ENCODE measurements at regions of chr11 and their contacts with region 1.

Region 1: GRCh38 chr11:2077061-2077802 is 62.0 kb downstream of the IGF2 start:
- DNase-seq: peak; percentile 77
- ATAC-seq: peak; percentile 93
- H3K4me3 Mint-ChIP-seq: no peak overlapping the region
- H3K27ac Mint-ChIP-seq: peak overlapping the region; percentile 84
- H3K4me1 Mint-ChIP-seq: peaks cover 21% of the 10 kb centered on the region
- H3K27me3 Mint-ChIP-seq: peaks cover 30% of the 10 kb centered on the region

Region 2: DNA sequence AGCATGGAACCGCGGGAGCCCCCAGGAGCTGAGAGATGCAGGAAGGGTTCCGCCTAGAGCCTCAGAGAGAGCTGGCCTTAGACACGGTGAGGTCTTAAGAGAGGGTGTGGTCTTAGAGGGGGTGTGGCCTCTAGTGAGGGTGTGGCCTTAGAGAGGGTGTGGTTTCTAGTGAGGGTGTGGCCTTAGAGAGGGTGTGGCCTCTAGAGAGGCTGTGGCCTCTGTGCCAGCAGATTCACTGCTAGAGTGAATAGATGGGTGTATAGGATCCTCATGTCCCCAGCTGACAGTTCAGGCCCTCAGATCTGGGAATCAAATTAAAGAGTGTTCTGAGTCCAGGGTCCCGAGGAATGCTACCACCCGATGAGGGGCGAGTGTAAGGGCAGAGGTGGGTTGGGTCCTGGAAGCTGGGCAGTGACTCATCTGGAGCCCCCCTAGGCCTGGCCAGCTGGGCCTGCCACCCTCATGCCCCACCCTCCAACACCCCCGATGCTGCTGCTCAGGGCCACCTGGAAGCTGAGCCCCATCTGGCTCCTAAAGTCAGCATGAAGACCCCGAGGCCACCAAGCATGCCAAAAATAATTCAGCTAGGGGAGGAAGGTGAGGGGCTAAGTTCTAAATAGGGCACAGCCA is 12.4 kb after region 1 on chr11:
- CTCF ChIA-PET with region 1: interaction called, 6 read pairs
- POLR2A ChIA-PET with region 1: no interaction called
- intact Hi-C with region 1: loop called in 1 of 2 experiments (anchors 1 kb)
- DNase-seq: peak; percentile 66
- ATAC-seq: peak; percentile 99
- H3K4me3 Mint-ChIP-seq: no peak overlapping the region
- H3K27ac Mint-ChIP-seq: no peak overlapping the region
- H3K4me1 Mint-ChIP-seq: peaks cover 9% of the 10 kb centered on the region
- H3K27me3 Mint-ChIP-seq: peaks cover 3% of the 10 kb centered on the region

Region 3: DNA sequence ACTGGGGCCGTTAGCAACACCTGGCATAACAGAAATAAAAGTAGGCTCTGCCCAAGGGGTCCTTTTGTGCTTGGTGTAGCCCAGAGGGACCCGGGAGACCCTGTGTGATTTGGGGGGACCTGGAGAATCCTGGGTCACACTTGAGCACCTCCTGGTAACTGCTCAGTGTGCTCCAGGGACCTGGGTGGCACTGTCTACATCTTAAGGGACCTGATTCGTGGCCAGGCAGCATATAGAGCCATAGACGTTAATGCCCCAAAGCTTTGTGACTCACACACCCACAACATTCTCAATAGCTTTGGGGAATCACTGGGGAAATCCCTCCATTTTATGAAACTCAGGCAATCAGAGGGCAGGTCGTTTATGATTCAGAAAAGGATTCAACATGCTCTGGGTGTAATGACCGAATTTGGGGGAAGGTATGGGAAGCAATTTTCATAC is 65.5 kb after region 1 on chr11:
- CTCF ChIA-PET with region 1: interaction called, 7 read pairs
- POLR2A ChIA-PET with region 1: interaction called, 15 read pairs
- intact Hi-C with region 1: loop called (anchors 1 kb)
- DNase-seq: peak; percentile 71
- ATAC-seq: peak; percentile 96
- H3K4me3 Mint-ChIP-seq: peak overlapping the region; percentile 55
- H3K27ac Mint-ChIP-seq: no peak overlapping the region
- H3K4me1 Mint-ChIP-seq: peaks cover 31% of the 10 kb centered on the region
- H3K27me3 Mint-ChIP-seq: peaks cover 58% of the 10 kb centered on the region

Measured in activated CD4-positive, alpha-beta T cell treated with anti-CD3 and anti-CD28 coated beads for 36 hours (primary cell).